Activated naive CD4-positive, alpha-beta T cell treated with anti-CD3 and anti-CD28 coated beads for 36 hours (primary cell): ENCODE measurements at regions of chr13 and their contacts with region 1.

Region 1: GRCh38 chr13:75326173-75327134 is 155.5 kb downstream of the TBC1D4 start:
- DNase-seq: peak; percentile 83
- H3K4me3 Mint-ChIP-seq: peak overlapping the region; percentile 92
- H3K27ac Mint-ChIP-seq: peak overlapping the region; percentile 98
- H3K4me1 Mint-ChIP-seq: peaks cover 26% of the 10 kb centered on the region
- H3K27me3 Mint-ChIP-seq: no peaks in the 10 kb centered on the region

Region 2: GRCh38 chr13:73765651-73766384 is 1560.6 kb before region 1 on chr13:
- CTCF ChIA-PET with region 1: no interaction called
- intact Hi-C with region 1: loop called (anchors 5 kb)
- DNase-seq: peak; percentile 95
- H3K4me3 Mint-ChIP-seq: peak overlapping the region; percentile 70
- H3K27ac Mint-ChIP-seq: peak overlapping the region; percentile 92
- H3K4me1 Mint-ChIP-seq: peaks cover 64% of the 10 kb centered on the region
- H3K27me3 Mint-ChIP-seq: no peaks in the 10 kb centered on the region

Region 3: GRCh38 chr13:75308222-75308621 is 18.2 kb before region 1 on chr13:
- CTCF ChIA-PET with region 1: interaction called, 11 read pairs
- intact Hi-C with region 1: loop called (anchors 1 kb)
- DNase-seq: peak; percentile 83
- H3K4me3 Mint-ChIP-seq: no peak overlapping the region
- H3K27ac Mint-ChIP-seq: peak overlapping the region; percentile 70
- H3K4me1 Mint-ChIP-seq: peaks cover 45% of the 10 kb centered on the region
- H3K27me3 Mint-ChIP-seq: no peaks in the 10 kb centered on the region

Region 4: GRCh38 chr13:75482070-75482819 is 155.8 kb after region 1 on chr13 and contains the start of gene TBC1D4:
- CTCF ChIA-PET with region 1: no interaction called
- intact Hi-C with region 1: loop called (anchors 1 kb)
- DNase-seq: peak; percentile 68
- H3K4me3 Mint-ChIP-seq: peak within 1 kb of the TSS; percentile 94
- H3K27ac Mint-ChIP-seq: no peak within 1 kb of the TSS
- H3K4me1 Mint-ChIP-seq: peaks cover 11% of the 10 kb centered on the region
- H3K27me3 Mint-ChIP-seq: peaks cover 53% of the 10 kb centered on the region
- total RNA-seq, gene TBC1D4: 13.4 to 19.7 TPM

Region 5: DNA sequence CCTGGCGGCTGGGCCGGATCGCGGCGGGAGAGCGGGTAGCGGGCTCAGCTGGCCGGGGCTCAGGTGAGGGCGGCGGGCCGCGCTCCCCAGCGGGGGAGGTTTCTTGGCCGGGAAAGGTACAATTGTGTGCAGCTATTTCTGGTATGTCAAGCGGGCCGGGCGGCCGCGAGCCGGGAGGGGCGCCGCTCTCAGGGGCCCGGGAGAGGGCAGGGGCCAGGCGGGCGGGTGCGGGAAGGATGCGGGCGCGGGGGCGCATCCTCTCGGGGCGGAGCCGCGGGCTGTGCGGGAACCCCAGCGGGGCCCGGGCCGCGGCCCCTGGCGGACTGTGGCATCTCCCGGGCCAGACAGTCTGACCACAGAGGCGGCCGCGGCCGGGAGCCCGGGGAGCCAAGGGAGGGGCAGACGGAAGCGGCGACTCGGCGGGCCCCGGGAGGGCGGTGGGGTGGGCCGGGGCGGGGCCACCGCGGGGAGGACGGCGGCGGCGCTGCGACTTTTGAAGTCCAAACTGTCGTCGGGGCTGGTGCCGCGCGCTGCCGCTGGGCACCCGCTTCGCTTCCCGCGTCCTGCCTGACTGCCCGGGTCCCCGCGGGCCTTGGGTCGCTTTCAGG is 309.5 kb after region 1 on chr13 and contains the start of gene LMO7:
- CTCF ChIA-PET with region 1: no interaction called
- intact Hi-C with region 1: loop called (anchors 5 kb)
- DNase-seq: peak; percentile 55
- H3K4me3 Mint-ChIP-seq: peak within 1 kb of the TSS; percentile 75
- H3K27ac Mint-ChIP-seq: no peak within 1 kb of the TSS
- H3K4me1 Mint-ChIP-seq: peaks cover 6% of the 10 kb centered on the region
- H3K27me3 Mint-ChIP-seq: peaks cover 12% of the 10 kb centered on the region
- total RNA-seq, gene LMO7: 10.5 to 12.0 TPM

Region 6: DNA sequence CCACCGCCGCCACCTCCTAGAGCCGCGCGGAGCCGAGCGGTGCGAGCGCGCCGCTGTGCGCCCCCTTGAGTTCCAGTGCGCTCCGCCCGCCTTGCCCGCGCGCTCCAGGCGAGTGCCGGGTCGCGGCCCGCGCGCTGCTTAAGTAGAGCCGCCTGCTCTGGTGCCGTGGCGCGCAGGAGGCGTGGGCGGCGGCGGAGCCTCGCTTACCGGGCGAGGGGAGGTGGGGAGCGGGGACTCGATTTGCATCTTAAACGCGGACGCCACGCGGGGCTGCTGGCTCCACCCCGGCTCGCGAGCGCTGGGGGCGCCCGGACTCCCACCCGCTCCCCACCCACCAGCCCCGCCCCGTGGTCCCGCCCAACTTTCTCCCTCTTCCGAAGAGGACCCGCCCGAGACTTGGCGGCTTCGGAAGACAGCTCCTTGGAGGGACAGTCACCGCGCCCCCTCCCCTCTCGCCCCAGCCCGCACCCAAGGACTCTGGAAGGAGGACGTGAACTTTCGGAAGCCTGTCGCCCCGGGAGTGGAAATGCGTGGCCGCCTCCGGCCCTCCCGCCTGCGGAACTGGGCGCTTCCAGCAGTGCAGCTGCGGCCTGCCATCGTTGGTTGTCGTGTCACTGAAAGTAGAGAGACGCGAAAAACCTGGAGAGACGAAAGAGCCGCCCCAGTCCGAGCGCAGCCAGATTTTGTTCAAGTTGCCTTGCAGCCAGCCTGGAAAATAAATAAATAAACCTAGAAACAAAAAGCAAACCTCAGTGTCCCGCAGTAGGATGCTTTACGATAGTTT is 1560.0 kb after region 1 on chr13 and contains the start of gene KCTD12:
- CTCF ChIA-PET with region 1: no interaction called
- intact Hi-C with region 1: loop called (anchors 10 kb)
- DNase-seq: peak; percentile 70
- H3K4me3 Mint-ChIP-seq: peak within 1 kb of the TSS; percentile 89
- H3K27ac Mint-ChIP-seq: peak within 1 kb of the TSS; percentile 78
- H3K4me1 Mint-ChIP-seq: peaks cover 28% of the 10 kb centered on the region
- H3K27me3 Mint-ChIP-seq: peaks cover 7% of the 10 kb centered on the region
- total RNA-seq, gene KCTD12: 6.2 to 6.4 TPM